Endothelial cell of umbilical vein (primary cell): ENCODE measurements at regions of chr14 and their contacts with region 1.

Region 1: DNA sequence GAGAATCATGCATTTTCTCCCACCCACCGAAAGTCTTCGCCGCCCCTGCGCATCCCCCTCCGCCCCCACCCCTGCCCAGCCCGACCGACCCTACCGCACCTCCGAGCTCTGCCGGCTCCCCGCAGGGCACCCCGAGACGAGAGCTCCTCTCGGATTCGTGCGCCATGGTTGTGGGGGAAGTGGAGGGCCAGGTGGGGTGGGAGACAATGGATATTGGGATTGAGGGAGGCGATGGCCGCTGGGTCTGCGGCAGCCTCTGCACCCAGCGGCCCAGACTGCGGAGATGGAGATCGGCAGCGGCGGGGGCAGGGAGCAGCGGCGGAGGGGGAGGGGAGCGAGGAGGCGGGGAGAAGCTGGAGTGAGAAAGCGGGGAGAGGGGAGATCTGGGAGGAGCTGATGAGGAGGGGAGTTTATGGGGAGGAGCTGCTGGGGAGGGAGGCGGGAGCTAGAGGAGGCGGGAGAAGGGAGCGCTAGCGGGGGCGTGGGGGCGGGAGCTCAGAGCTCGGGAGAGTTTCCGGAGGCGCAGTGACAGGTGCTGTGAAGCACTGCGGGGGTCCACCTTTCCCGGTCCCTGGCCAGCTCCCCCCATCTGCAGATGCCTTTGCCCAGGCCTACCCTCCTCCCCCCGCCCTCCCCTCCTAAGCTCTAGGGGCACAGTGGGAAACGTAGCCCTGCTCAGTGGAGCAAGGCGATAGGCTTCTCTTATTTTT is at the start of gene SALL2:
- DNase-seq: peak; percentile 63
- H3K4me3 ChIP-seq: peak within 1 kb of the TSS; percentile 32 to 80 (median 67)
- H3K27ac ChIP-seq: no peak within 1 kb of the TSS
- H3K4me1 ChIP-seq: peaks cover 3% of the 10 kb centered on the region
- H3K27me3 ChIP-seq: peaks cover 20 to 21% of the 10 kb centered on the region in 2 experiments
- CTCF ChIP-seq: no peak
- POLR2A ChIP-seq: no peak
- total RNA-seq, gene SALL2: 4.6 and 6.8 TPM in 2 replicates

Region 2: GRCh38 chr14:21071225-21072030 is 454.7 kb before region 1 on chr14:
- CTCF ChIA-PET with region 1: no interaction called
- POLR2A ChIA-PET with region 1: no interaction called
- dilution Hi-C with region 1: no loop called
- intact Hi-C with region 1: no loop called
- DNase-seq: peak; percentile 84
- H3K4me3 ChIP-seq: peak overlapping the region in 2 of 3 experiments; percentile 54 to 55
- H3K27ac ChIP-seq: no peak overlapping the region
- H3K4me1 ChIP-seq: peaks cover 10% of the 10 kb centered on the region
- H3K27me3 ChIP-seq: peaks cover 16 to 38% of the 10 kb centered on the region in 2 experiments
- CTCF ChIP-seq: no peak
- POLR2A ChIP-seq: no peak

Region 3: DNA sequence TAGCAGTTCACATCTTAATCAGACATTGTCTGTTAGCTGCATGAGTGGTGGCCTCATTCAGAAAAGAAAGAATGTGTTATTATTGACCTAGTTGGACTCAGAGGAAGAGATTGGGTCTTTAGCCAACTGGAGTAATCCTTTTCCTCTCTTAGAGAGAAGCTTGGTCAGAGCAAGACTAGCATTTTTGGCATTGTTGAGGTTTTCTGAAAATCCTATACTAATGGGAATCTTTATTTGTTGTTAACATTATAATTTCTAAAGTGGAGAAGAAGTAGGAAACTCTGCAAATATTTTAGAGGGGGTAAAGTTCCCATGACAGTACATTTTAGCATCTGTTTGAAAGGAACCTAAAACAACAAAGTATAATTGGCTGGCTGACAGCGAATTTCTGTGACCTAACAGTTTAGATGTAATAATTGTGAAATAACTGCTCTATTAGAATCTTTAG is 39.5 kb before region 1 on chr14:
- CTCF ChIA-PET with region 1: no interaction called
- POLR2A ChIA-PET with region 1: no interaction called
- dilution Hi-C with region 1: no loop called
- intact Hi-C with region 1: no loop called
- DNase-seq: no peak
- H3K4me3 ChIP-seq: no peak overlapping the region
- H3K27ac ChIP-seq: no peak overlapping the region
- H3K4me1 ChIP-seq: no peaks in the 10 kb centered on the region
- H3K27me3 ChIP-seq: no peaks in the 10 kb centered on the region
- CTCF ChIP-seq: no peak
- POLR2A ChIP-seq: no peak

Region 4: DNA sequence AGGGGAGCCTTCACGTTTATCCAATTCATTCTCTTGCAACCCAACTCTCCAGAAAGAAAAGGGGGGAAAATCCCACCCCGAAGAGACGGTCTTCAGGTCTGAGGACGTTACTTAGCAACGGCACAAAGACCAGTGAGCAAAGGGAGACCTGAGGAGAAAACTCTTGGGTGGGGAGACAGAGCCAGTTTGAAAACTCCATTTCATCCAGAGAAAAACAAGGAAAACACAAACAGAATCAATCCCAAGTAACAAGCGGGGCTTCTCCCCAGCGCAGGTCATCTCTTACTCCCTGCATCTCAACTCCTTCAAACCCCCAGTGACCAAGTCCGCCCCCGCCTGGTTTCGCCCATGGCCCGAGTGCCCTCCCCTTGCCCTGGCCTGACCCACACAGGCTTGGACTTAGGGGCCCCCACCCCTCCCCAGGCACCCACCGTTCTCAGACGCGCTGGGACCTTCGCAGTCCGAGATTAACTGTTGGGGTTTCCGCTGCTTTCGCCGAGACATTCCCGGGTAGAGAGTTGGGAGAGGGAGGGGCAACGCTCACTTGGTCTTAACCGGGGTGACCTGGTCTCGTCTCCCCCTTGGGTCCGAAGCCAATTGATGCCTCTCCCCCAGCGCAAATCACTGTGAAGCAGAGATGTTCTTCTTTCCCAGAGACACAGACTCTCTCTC is 10.4 kb after region 1 on chr14:
- CTCF ChIA-PET with region 1: interaction called, 10 read pairs
- POLR2A ChIA-PET with region 1: no interaction called
- dilution Hi-C with region 1: no loop called
- intact Hi-C with region 1: no loop called
- DNase-seq: no peak
- H3K4me3 ChIP-seq: no peak overlapping the region
- H3K27ac ChIP-seq: no peak overlapping the region
- H3K4me1 ChIP-seq: no peaks in the 10 kb centered on the region
- H3K27me3 ChIP-seq: peaks cover 51 to 59% of the 10 kb centered on the region in 2 experiments
- CTCF ChIP-seq: no peak
- POLR2A ChIP-seq: no peak

Region 5: DNA sequence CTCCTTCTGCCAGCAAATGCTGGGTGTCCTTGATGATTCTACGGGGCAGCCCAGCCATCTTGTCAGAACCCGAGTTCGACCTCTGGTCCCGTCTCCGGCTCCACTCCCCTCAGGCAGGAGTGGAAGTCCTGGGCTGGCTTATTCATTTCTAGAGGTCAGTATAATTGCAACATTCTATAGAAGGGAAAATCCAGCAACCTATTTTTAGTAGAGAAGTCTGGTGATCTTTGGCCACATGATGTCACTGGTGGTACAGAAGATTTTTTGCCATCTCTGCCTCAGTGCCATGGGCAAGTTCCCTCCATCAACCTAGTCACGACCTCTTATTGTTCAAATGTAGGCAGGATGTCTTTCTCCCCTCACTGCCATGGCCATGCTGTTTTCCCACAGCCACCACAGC is 86.2 kb after region 1 on chr14:
- CTCF ChIA-PET with region 1: no interaction called
- POLR2A ChIA-PET with region 1: no interaction called
- dilution Hi-C with region 1: no loop called
- intact Hi-C with region 1: no loop called
- DNase-seq: no peak
- H3K4me3 ChIP-seq: no peak overlapping the region
- H3K27ac ChIP-seq: no peak overlapping the region
- H3K4me1 ChIP-seq: no peaks in the 10 kb centered on the region
- H3K27me3 ChIP-seq: no peaks in the 10 kb centered on the region
- CTCF ChIP-seq: no peak
- POLR2A ChIP-seq: no peak